ENCODE measurements at regions of chr15 and their contacts with region 1.

Region 1: GRCh38 chr15:78638658-78639314 is 2.2 kb downstream of the CHRNB4 start:
- DNase-seq: peak; percentile 63 to 78 (median 71)
- H3K4me3 ChIP-seq: no peak overlapping the region
- H3K27ac ChIP-seq: no peak overlapping the region
- H3K4me1 ChIP-seq: peaks cover 0 to 14% (median 12%) of the 10 kb centered on the region in 4 experiments
- H3K27me3 ChIP-seq: peaks cover 0 to 8% (median 0%) of the 10 kb centered on the region in 5 experiments

Region 2: GRCh38 chr15:78618490-78618934 is 20.3 kb before region 1 on chr15:
- CTCF ChIA-PET with region 1: interaction called, 13 read pairs
- POLR2A ChIA-PET with region 1: interaction called, 3 read pairs
- DNase-seq: peak; percentile 80 to 90 (median 84)
- H3K4me3 ChIP-seq: no peak overlapping the region
- H3K27ac ChIP-seq: no peak overlapping the region
- H3K4me1 ChIP-seq: peaks cover 0 to 17% (median 14%) of the 10 kb centered on the region in 4 experiments
- H3K27me3 ChIP-seq: peaks cover 5 to 41% (median 18%) of the 10 kb centered on the region in 5 experiments

Region 3: GRCh38 chr15:78625606-78626280 is 13.0 kb before region 1 on chr15:
- CTCF ChIA-PET with region 1: interaction called, 13 read pairs
- POLR2A ChIA-PET with region 1: no interaction called
- DNase-seq: peak in 2 of 3 donors; percentile 43 to 61
- H3K4me3 ChIP-seq: no peak overlapping the region
- H3K27ac ChIP-seq: no peak overlapping the region
- H3K4me1 ChIP-seq: peaks cover 0 to 11% (median 4%) of the 10 kb centered on the region in 4 experiments
- H3K27me3 ChIP-seq: peaks cover 5 to 24% (median 18%) of the 10 kb centered on the region in 5 experiments

Region 4: GRCh38 chr15:78654272-78654671 is 15.5 kb after region 1 on chr15:
- CTCF ChIA-PET with region 1: interaction called, 30 read pairs
- POLR2A ChIA-PET with region 1: no interaction called
- DNase-seq: no peak
- H3K4me3 ChIP-seq: no peak overlapping the region
- H3K27ac ChIP-seq: no peak overlapping the region
- H3K4me1 ChIP-seq: no peaks in the 10 kb centered on the region
- H3K27me3 ChIP-seq: no peaks in the 10 kb centered on the region

Region 5: DNA sequence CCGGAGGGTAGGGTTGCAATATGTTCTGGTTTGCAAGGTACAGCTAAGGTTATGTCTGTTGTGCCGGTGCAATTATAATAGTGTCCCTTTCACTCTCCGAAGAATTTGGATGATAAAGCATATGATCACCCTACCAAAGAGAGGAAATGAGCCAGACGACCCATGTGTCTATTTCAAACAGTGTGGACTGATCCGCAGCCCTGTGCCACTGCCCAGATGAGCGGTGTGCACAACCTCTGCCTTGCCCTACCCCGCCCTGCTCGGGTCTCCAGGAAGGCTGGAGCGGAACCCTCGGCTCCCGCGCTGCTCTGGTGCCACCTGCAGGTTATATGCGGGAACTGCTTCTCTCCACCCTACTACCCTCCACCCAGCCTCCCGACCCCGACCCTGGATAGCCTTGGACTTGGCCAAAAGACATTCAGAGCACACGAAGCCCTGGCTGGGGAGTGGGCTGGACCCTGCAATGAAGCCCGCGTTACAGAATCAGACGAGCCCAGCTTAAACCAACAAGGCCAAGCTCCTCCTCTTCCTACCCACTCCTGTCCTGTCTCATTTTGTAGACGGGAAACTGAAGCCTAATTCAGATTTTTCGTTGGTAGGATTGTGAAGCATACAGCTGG is 70.6 kb after region 1 on chr15:
- CTCF ChIA-PET with region 1: interaction called, 83 read pairs
- POLR2A ChIA-PET with region 1: no interaction called
- DNase-seq: peak; percentile 46 to 61 (median 60)
- H3K4me3 ChIP-seq: peak overlapping the region in 2 of 7 experiments; percentile 4 to 49
- H3K27ac ChIP-seq: no peak overlapping the region
- H3K4me1 ChIP-seq: peaks cover 0 to 6% (median 2%) of the 10 kb centered on the region in 4 experiments
- H3K27me3 ChIP-seq: peaks cover 0 to 18% (median 5%) of the 10 kb centered on the region in 5 experiments

Region 6: DNA sequence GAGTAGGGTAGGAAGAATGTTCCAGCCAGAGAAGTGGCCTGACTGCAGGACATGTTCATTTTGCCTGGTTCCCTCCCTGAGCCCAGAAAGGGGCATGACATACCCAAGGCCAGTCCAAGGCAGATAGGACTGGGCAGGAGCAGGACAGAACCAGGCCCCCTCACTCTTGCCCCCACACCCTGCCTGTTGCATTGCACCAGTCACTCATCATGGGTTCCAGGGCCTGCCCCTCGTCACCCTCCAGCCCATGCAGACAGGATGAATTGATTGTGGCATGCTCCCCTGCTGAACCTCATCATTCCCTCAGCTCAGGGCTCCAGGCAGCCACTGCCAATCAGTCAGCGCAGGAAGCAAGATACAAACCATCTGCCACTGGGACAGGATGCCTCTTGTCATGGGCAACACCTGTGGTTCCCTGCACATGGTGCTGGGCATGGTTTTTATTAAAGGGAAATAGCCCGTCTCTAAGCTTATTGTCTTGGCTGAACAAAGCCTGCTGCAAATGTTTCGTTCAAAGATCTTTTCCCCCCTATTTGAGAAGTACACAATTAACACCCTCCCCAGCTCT is 402.9 kb after region 1 on chr15:
- CTCF ChIA-PET with region 1: no interaction called
- POLR2A ChIA-PET with region 1: no interaction called
- DNase-seq: no peak
- H3K4me3 ChIP-seq: no peak overlapping the region
- H3K27ac ChIP-seq: no peak overlapping the region
- H3K4me1 ChIP-seq: no peaks in the 10 kb centered on the region
- H3K27me3 ChIP-seq: peaks cover 0 to 14% (median 6%) of the 10 kb centered on the region in 5 experiments

Measured in common myeloid progenitor, CD34-positive (primary cell).